K562 (cell line): ENCODE measurements at regions of chr14 and their contacts with region 1.

Region 1: GRCh38 chr14:35365130-35366055 is 39.2 kb downstream of the NFKBIA start:
- DNase-seq: peak in 3 of 4 experiments; percentile 36 to 82 (median 71)
- ATAC-seq: peak; percentile 56
- H3K4me3 ChIP-seq: no peak overlapping the region
- H3K27ac ChIP-seq: peak overlapping the region; percentile 99
- H3K4me1 ChIP-seq: peaks cover 43 to 54% of the 10 kb centered on the region in 2 experiments
- H3K27me3 ChIP-seq: no peaks in the 10 kb centered on the region; a peak in 1 of 5 replicates
- CTCF ChIP-seq: no peak
- EP300 ChIP-seq: peak; percentile 58; the same call in 1 of the 2 replicates
- POLR2A ChIP-seq: no peak
- RAD21 ChIP-seq: no peak

Region 2: GRCh38 chr14:34797747-34798583 is 567.4 kb before region 1 on chr14:
- CTCF ChIA-PET with region 1: no interaction called
- POLR2A ChIA-PET with region 1: no interaction called
- in situ Hi-C with region 1: no loop called
- intact Hi-C with region 1: no loop called
- DNase-seq: peak in 3 of 4 experiments; percentile 5 to 45 (median 8)
- ATAC-seq: peak; percentile 84
- H3K4me3 ChIP-seq: no peak overlapping the region
- H3K27ac ChIP-seq: no peak overlapping the region
- H3K4me1 ChIP-seq: peaks cover 0 to 6% of the 10 kb centered on the region in 2 experiments; a peak in 2 of 5 replicates
- H3K27me3 ChIP-seq: no peaks in the 10 kb centered on the region
- CTCF ChIP-seq: no peak
- EP300 ChIP-seq: no peak
- POLR2A ChIP-seq: no peak
- RAD21 ChIP-seq: no peak

Region 3: DNA sequence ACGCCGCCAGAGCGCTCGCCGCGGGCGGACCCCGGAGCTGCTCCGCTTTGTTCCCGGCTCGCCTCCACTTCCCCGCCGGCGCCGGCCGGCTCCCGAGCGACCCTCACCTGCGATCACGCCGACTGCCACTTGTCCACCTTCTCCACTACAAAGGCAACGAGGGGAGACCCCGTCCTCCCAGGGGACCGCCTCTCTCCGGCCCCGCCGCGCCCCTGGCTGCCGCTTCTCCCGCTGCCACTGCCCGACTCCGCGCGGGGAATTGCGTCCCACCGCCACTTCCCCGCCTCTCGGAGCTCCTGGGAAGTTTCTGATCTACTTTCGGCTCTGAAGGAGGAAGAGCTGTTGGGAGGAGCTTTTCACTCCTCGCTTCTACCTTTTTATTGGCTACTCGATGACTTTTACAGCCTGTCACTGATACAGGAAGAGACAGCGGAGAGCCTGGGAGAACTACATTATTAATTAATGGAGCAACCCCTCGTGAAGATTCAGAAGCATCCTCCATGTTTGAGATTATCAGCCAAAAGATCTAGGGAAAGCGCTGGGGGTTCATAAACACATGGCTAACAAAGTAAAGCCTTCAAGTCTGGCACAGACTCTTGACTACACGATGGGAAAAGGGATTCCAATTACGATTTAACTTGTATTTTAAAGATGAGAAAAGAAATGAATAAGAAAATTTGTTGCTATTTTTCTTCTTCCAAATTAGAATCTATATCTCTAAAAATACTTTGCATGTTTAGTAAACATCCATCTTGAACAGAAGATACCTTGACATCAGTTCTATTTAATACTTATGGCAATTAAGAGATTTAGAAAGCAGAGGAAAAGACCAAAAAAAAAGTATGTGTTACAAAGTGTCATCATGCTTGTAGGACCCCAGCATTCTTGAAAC is 490.1 kb before region 1 on chr14 and contains the start of gene BAZ1A:
- CTCF ChIA-PET with region 1: no interaction called
- POLR2A ChIA-PET with region 1: no interaction called
- in situ Hi-C with region 1: no loop called
- intact Hi-C with region 1: no loop called
- DNase-seq: peak; percentile 69 to 81 (median 70)
- ATAC-seq: peak; percentile 44
- H3K4me3 ChIP-seq: peak within 1 kb of the TSS; percentile 96
- H3K27ac ChIP-seq: peak within 1 kb of the TSS; percentile 98
- H3K4me1 ChIP-seq: peaks cover 6 to 11% of the 10 kb centered on the region in 2 experiments; a peak in 4 of 5 replicates
- H3K27me3 ChIP-seq: no peaks in the 10 kb centered on the region
- CTCF ChIP-seq: no peak
- EP300 ChIP-seq: no peak; the same call in 1 of the 2 replicates
- POLR2A ChIP-seq: peak; percentile 90
- RAD21 ChIP-seq: no peak
- polyA plus RNA-seq, gene BAZ1A: 22.0 to 23.6 TPM

Region 4: DNA sequence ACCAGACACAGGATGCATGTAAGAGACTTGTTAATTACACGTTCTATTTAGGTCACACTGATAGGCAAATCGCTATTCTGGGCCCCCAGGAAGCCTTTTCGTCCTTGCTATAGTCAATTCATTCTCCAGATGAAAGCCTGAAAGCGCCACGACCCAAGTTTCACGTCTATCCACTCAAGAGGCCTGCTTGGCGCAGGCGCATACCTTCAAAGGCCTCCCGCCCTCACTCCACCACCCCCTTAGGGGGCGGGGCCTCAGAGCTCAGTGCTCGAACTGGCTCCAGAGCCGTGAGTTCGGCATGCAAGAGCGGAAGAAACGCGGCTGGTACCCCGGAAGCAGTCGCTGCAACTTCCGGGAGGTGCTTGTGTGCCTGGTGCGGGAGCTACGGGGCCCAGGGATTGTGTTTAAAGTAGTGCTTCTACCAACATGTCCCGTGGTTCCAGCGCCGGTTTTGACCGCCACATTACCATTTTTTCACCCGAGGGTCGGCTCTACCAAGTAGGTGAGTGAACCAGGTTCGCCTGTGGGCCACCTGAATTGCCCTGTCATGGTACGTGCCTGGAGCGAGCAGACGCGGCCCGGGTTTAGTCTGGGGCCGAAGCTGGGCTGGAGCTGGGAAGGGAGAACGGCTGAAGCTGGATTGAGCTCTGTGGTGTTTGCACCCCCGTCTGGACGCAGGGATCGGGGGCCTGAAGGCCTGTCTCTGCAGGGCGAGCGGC is 73.2 kb before region 1 on chr14 and contains the start of gene PSMA6:
- CTCF ChIA-PET with region 1: no interaction called
- POLR2A ChIA-PET with region 1: no interaction called
- in situ Hi-C with region 1: no loop called
- intact Hi-C with region 1: loop called (anchors 5 kb)
- DNase-seq: peak; percentile 93 to 99 (median 96)
- ATAC-seq: peak; percentile 94
- H3K4me3 ChIP-seq: peak within 1 kb of the TSS; percentile 79
- H3K27ac ChIP-seq: peak within 1 kb of the TSS; percentile 88
- H3K4me1 ChIP-seq: peaks cover 4 to 12% of the 10 kb centered on the region in 2 experiments; a peak in 4 of 5 replicates
- H3K27me3 ChIP-seq: no peaks in the 10 kb centered on the region
- CTCF ChIP-seq: no peak
- EP300 ChIP-seq: no peak
- POLR2A ChIP-seq: peak; percentile 87
- RAD21 ChIP-seq: no peak
- polyA plus RNA-seq, gene PSMA6: 922 to 952 TPM

Region 5: GRCh38 chr14:35320472-35320871 is 44.9 kb before region 1 on chr14:
- CTCF ChIA-PET with region 1: no interaction called
- POLR2A ChIA-PET with region 1: no interaction called
- in situ Hi-C with region 1: no loop called
- intact Hi-C with region 1: no loop called
- DNase-seq: no peak
- ATAC-seq: no peak
- H3K4me3 ChIP-seq: no peak overlapping the region
- H3K27ac ChIP-seq: no peak overlapping the region
- H3K4me1 ChIP-seq: no peaks in the 10 kb centered on the region
- H3K27me3 ChIP-seq: no peaks in the 10 kb centered on the region
- CTCF ChIP-seq: no peak
- EP300 ChIP-seq: no peak
- POLR2A ChIP-seq: no peak
- RAD21 ChIP-seq: no peak

Region 6: DNA sequence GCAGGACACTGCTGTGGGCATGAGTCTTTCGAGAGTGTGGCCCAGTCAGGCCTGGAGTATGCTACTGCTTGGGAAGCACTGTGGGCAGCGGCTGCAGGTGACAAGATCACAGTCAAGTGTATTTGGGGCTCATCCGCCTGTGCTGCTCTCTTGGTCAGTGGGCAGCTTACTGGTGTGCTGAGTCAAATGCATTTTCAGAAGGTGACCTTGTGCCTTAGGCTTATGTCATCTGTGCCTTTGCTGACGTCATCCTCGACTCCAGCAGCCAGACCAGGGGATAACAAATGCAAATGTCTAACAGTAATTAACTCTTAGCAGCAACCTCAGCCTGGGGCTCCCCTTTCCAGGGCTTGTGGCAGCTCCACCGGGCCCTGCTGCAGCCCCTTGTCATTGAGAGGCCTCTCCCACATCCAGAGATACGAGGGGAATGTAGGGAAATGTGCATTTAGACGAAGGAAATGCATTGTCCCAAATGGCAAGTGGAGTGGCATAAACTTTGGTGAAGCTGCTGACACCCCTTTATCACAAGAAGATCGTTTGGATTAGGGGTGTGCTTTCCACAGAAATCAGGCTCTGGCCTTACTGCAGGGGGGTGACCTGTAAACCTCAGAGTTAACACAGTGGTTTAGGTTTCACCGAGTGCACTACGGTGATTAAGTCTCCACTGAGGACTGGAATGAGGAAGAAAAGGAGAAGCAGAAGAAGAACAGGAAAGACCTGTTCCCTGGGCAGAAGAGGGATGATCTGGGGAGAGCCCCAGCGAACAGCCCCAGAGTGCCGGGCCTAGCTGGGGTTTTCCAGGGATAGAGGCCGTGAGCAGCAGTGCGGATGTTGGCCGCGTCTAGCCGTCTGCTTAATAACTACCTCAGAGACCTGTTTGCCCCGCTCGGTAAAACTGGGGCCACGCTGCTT is 33.5 kb before region 1 on chr14:
- CTCF ChIA-PET with region 1: no interaction called
- POLR2A ChIA-PET with region 1: no interaction called
- in situ Hi-C with region 1: no loop called
- intact Hi-C with region 1: loop called (anchors 5 kb)
- DNase-seq: peak in 3 of 4 experiments; percentile 39 to 66 (median 44)
- ATAC-seq: peak; percentile 45
- H3K4me3 ChIP-seq: no peak overlapping the region
- H3K27ac ChIP-seq: peak overlapping the region; percentile 51; the same call in 1 of the 3 replicates
- H3K4me1 ChIP-seq: peaks cover 35 to 44% of the 10 kb centered on the region in 2 experiments; a peak in 4 of 5 replicates
- H3K27me3 ChIP-seq: no peaks in the 10 kb centered on the region
- CTCF ChIP-seq: no peak
- EP300 ChIP-seq: no peak
- POLR2A ChIP-seq: no peak
- RAD21 ChIP-seq: no peak

Region 7: DNA sequence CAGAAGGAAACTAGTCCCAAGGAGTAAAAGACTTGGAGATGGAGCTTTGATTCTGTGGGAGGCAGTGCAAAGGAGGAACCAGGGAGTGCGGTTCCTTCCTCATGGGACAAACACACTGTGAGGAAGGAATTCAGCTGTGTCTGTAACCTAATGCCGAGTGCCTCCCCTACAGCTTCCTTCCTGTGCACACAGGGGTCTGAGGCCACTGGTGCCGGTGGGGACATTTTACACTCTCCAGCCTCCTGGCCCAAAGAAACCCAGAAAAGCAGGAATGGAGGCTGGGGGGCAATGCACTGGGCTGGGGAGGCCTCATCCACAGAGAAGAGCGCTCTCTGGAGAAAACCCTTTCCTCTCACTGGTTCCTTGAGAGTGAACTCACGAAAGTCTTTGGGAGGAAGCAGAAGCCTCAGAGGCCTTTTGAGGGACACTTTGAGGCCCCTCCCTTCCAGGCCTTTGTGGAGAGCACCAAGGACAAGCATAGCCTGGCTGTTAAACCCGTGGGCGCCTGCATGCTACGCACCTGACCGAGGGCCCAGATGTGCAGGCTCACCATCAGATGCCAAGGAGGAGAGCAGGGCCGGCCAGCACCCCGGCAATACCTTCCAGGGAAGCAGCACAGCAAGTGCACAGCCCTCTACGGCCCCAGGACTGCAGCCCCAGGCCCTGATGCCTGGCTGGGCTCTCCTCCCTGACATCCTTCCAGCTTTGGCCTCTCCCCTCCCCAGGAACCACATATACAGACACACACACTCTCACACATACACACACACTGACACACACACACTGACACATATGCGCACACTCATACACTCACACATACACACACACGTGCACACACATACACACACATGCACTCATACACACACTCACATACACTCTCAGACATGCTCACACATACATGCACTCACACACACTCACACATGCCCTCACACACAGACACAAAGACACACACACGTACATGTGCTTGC is 12.8 kb before region 1 on chr14:
- CTCF ChIA-PET with region 1: no interaction called
- POLR2A ChIA-PET with region 1: interaction called, 11 read pairs
- in situ Hi-C with region 1: no loop called
- intact Hi-C with region 1: no loop called
- DNase-seq: no peak
- ATAC-seq: peak; percentile 60
- H3K4me3 ChIP-seq: no peak overlapping the region
- H3K27ac ChIP-seq: peak overlapping the region; percentile 40
- H3K4me1 ChIP-seq: peaks cover 18 to 19% of the 10 kb centered on the region in 2 experiments
- H3K27me3 ChIP-seq: no peaks in the 10 kb centered on the region
- CTCF ChIP-seq: no peak
- EP300 ChIP-seq: no peak
- POLR2A ChIP-seq: no peak
- RAD21 ChIP-seq: no peak

Region 8: GRCh38 chr14:35385042-35385839 is 19.8 kb after region 1 on chr14:
- CTCF ChIA-PET with region 1: no interaction called
- POLR2A ChIA-PET with region 1: interaction called, 16 read pairs
- in situ Hi-C with region 1: no loop called
- intact Hi-C with region 1: no loop called
- DNase-seq: peak; percentile 57 to 84 (median 62)
- ATAC-seq: peak; percentile 63
- H3K4me3 ChIP-seq: no peak overlapping the region
- H3K27ac ChIP-seq: peak overlapping the region; percentile 12; the same call in 1 of the 3 replicates
- H3K4me1 ChIP-seq: peaks cover 30 to 31% of the 10 kb centered on the region in 2 experiments; a peak in 4 of 5 replicates
- H3K27me3 ChIP-seq: no peaks in the 10 kb centered on the region
- CTCF ChIP-seq: no peak
- EP300 ChIP-seq: no peak
- POLR2A ChIP-seq: no peak
- RAD21 ChIP-seq: no peak